ENCODE measurements at regions of chr2 and their contacts with region 1.

Region 1: GRCh38 chr2:37802899-37803379 is 122.1 kb upstream of the RMDN2 start:
- DNase-seq: no peak
- H3K4me3 Mint-ChIP-seq: peak overlapping the region; percentile 6
- H3K27ac Mint-ChIP-seq: peak overlapping the region; percentile 34
- H3K4me1 Mint-ChIP-seq: peaks cover 30% of the 10 kb centered on the region
- H3K27me3 Mint-ChIP-seq: no peaks in the 10 kb centered on the region
- CTCF ChIP-seq: no peak

Region 2: DNA sequence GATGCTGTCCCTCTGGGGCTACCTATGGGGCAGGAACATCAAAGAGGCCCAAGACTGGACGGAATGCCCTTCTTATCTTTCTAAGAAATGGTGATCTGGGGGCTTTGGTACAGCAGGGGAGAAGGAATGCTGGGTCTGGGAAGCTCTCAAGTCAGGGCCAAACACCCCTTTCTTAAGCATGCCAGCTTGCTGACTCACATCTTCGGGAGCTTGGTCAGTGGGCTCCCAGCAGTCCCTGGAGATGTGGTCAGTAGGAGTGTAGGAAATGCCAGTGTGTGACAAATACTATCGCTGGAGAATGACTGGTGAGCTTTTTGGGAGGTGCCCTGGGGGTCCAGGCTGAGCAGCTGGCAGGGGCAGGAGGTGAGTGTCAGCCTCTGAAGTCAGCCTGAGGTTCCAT is 26.5 kb before region 1 on chr2:
- CTCF ChIA-PET with region 1: no interaction called
- intact Hi-C with region 1: loop called (anchors 1 kb)
- DNase-seq: peak; percentile 24
- H3K4me3 Mint-ChIP-seq: no peak overlapping the region
- H3K27ac Mint-ChIP-seq: no peak overlapping the region
- H3K4me1 Mint-ChIP-seq: peaks cover 27% of the 10 kb centered on the region
- H3K27me3 Mint-ChIP-seq: no peaks in the 10 kb centered on the region
- CTCF ChIP-seq: no peak

Region 3: GRCh38 chr2:37819186-37819585 is 16.2 kb after region 1 on chr2:
- CTCF ChIA-PET with region 1: no interaction called
- intact Hi-C with region 1: no loop called
- DNase-seq: no peak
- H3K4me3 Mint-ChIP-seq: no peak overlapping the region
- H3K27ac Mint-ChIP-seq: no peak overlapping the region
- H3K4me1 Mint-ChIP-seq: no peaks in the 10 kb centered on the region
- H3K27me3 Mint-ChIP-seq: no peaks in the 10 kb centered on the region
- CTCF ChIP-seq: no peak

Region 4: GRCh38 chr2:37912056-37912455 is 109.1 kb after region 1 on chr2:
- CTCF ChIA-PET with region 1: no interaction called
- intact Hi-C with region 1: no loop called
- DNase-seq: no peak
- H3K4me3 Mint-ChIP-seq: no peak overlapping the region
- H3K27ac Mint-ChIP-seq: no peak overlapping the region
- H3K4me1 Mint-ChIP-seq: peaks cover 9% of the 10 kb centered on the region
- H3K27me3 Mint-ChIP-seq: no peaks in the 10 kb centered on the region
- CTCF ChIP-seq: no peak

Region 5: DNA sequence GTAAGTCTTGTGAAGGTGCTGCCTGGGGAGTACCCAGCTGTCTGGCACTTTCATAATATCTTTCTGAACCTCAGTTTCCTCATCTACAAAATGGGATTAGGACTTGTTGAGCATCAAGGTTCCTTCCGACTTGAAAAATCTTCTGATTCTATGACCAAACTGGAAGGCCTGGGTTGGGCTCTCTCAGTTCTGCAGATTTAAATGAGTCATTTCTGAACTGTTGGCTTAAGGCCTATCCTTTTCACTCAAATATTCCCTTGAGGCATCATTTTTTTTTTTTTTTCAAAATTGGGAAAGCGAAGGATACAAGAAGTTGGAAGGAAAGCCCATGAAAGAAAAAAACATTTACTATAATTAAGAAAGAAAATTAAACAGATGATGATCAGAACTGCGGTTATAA is 313.8 kb after region 1 on chr2:
- CTCF ChIA-PET with region 1: no interaction called
- intact Hi-C with region 1: no loop called
- DNase-seq: no peak
- H3K4me3 Mint-ChIP-seq: no peak overlapping the region
- H3K27ac Mint-ChIP-seq: no peak overlapping the region
- H3K4me1 Mint-ChIP-seq: peaks cover 65% of the 10 kb centered on the region
- H3K27me3 Mint-ChIP-seq: no peaks in the 10 kb centered on the region
- CTCF ChIP-seq: no peak